ENCODE measurements at regions of chr18 and their contacts with region 1.

Region 1: DNA sequence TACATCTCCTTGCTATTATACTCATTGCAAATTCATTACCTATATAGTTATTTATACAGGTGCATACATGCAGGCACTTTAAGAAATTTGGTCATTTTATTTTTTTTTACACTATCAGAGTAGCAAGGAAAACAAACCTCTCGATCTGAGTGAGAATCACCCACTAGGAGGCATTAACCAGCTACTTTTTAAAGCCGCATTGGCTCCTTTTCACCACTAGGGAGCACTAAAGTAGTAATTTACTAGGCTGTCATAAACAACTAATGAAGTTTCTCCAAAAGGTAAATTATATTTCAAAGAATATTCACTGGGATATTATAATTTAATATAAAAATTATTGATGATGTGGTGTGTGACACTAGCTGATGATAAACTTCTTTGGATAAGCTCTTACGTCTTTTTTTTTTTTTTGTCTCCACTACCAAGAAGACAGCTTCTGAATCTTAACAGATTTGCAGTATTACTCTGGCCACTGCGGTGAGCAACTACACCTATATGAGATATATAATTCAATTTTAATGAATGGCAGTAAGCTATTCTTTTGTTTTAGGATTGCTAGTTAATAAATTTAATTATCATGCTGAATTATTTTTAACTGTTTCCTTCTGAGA is 101.9 kb downstream of the NOL4 start:
- DNase-seq: peak; percentile 36
- ATAC-seq: peak; percentile 73
- H3K4me3 ChIP-seq: no peak overlapping the region
- H3K27ac ChIP-seq: no peak overlapping the region
- H3K4me1 ChIP-seq: peaks cover 13% of the 10 kb centered on the region
- H3K27me3 ChIP-seq: no peaks in the 10 kb centered on the region
- CTCF ChIP-seq: peak; percentile 65
- EP300 ChIP-seq: no peak
- POLR2A ChIP-seq: no peak
- RAD21 ChIP-seq: no peak

Region 2: GRCh38 chr18:34224423-34225217 is 101.8 kb after region 1 on chr18 and contains the start of gene NOL4:
- CTCF ChIA-PET with region 1: no interaction called
- POLR2A ChIA-PET with region 1: no interaction called
- in situ Hi-C with region 1: no loop called
- intact Hi-C with region 1: loop called (anchors 1 kb)
- DNase-seq: peak; percentile 51
- ATAC-seq: peak; percentile 87
- H3K4me3 ChIP-seq: peak within 1 kb of the TSS; percentile 46 to 72 (median 55); a peak in 5 of 6 replicates
- H3K27ac ChIP-seq: no peak within 1 kb of the TSS
- H3K4me1 ChIP-seq: peaks cover 45% of the 10 kb centered on the region
- H3K27me3 ChIP-seq: peaks cover 5 to 31% of the 10 kb centered on the region in 2 experiments
- CTCF ChIP-seq: peak; percentile 74
- EP300 ChIP-seq: no peak
- POLR2A ChIP-seq: no peak
- RAD21 ChIP-seq: no peak
- total RNA-seq, gene NOL4: 1.3 and 1.8 TPM in 2 replicates

Region 3: DNA sequence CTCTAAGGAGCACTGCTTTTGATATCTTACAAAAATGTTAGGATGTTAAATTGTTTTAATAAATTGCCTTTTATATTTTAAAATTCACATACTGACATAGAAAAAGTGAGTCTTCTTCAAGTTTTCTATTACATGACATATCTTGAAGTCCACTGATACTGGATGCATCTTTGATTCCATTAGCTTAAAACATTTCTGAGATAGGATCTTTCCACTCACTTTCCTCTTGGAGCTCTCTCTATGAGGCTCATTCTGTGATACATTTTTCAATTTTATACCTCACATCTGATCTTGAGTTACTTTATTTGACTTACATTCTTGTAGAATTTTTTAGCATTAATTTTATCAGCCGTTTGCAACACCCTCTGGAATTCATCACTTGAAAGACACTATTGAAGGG is 188.6 kb after region 1 on chr18:
- CTCF ChIA-PET with region 1: no interaction called
- POLR2A ChIA-PET with region 1: no interaction called
- in situ Hi-C with region 1: no loop called
- intact Hi-C with region 1: no loop called
- DNase-seq: no peak
- ATAC-seq: no peak
- H3K4me3 ChIP-seq: no peak overlapping the region
- H3K27ac ChIP-seq: no peak overlapping the region
- H3K4me1 ChIP-seq: no peaks in the 10 kb centered on the region
- H3K27me3 ChIP-seq: no peaks in the 10 kb centered on the region
- CTCF ChIP-seq: no peak
- EP300 ChIP-seq: no peak
- POLR2A ChIP-seq: no peak
- RAD21 ChIP-seq: no peak

Region 4: DNA sequence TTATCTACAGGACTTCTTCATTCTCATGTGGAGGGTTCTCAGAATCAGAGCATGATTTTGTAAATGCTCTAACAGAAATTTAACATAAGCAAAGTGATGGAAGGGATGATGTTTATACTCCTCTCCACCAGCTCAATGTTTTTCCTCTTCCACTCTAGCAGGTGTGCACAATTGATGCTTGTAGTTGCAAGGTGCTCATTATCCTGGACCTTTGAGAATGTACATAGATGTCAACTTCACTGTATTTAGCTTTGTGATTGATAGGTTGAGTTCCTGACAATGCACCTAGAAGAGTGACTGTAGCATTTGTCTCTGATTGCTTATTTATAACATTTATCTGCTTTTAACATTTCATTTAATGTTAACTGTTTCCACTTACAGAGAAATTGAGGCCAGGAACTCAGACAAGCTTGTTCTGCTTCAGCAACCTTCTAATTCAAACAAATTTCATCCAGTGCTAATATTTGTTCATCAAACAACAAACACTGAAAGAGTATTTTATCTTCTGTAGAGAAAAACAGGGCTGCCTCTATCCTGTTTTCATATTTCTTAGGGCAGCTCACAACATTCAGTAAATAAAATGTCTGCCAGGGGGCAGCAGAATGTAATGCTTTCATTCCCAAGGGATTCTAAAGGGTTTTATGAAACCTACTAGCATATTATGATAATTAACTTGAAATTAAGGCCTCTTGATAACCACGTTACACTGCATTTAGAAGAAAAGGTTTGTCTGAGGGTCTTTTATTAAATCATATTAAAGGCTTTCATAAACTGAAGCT is 229.7 kb after region 1 on chr18:
- CTCF ChIA-PET with region 1: no interaction called
- POLR2A ChIA-PET with region 1: no interaction called
- in situ Hi-C with region 1: no loop called
- intact Hi-C with region 1: no loop called
- DNase-seq: peak; percentile 22
- ATAC-seq: no peak
- H3K4me3 ChIP-seq: no peak overlapping the region
- H3K27ac ChIP-seq: no peak overlapping the region
- H3K4me1 ChIP-seq: no peaks in the 10 kb centered on the region
- H3K27me3 ChIP-seq: no peaks in the 10 kb centered on the region
- CTCF ChIP-seq: peak; percentile 39
- EP300 ChIP-seq: no peak
- POLR2A ChIP-seq: no peak
- RAD21 ChIP-seq: no peak

Measured in HepG2 (cell line).